Pancreas (tissue), 10 donors: ENCODE measurements at regions of chr16 and their contacts with region 1.

Region 1: DNA sequence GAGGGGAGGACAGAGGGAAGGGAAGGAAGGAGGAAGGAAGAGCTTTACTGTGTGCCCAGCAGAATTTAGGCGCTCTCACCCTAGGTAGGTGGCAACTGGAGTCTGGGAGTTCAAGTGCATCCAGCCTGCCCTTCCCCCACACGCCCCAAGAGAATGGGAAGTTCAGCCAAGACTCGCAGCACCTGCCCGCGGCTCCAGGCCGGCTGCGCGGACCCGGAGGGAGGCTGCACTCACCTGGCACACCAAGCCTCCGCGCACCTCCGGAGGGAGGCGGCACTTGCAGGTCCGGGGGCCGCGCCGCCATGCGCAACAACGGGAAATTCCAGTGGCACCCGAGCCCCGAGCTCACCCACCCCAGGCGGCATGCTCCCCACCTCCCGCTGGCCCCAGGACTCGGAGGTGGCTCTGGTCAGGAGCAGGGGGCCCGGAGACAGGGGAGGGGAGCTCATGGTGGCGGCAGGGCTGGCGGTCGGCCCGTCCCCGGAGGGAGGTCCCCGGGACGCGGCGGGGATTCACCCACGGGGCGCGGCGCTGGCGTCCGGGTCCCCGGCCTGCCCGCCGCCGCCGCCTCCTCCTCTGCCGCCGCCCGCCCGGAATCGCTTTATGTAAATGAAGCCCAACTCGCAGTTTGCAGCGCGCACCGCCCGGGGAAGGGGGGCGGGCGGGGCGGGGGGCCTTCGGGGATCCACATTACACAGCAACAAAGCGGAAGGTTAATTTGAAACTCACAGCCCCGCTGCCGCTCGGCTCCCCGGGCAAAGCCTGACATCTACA is at the start of gene ZFHX3:
- DNase-seq: peak; percentile 80 to 92 (median 84)
- ATAC-seq: peak; percentile 80 to 87 (median 84)
- H3K4me3 ChIP-seq: peak within 1 kb of the TSS; percentile 77 to 89 (median 81)
- H3K27ac ChIP-seq: peak within 1 kb of the TSS; percentile 89 to 92 (median 90)
- H3K4me1 ChIP-seq: peaks cover 19 to 50% (median 44%) of the 10 kb centered on the region in 3 donors
- H3K27me3 ChIP-seq: no peaks in the 10 kb centered on the region
- CTCF ChIP-seq: no peak
- total RNA-seq, gene ZFHX3: 8.7 to 17.6 (median 10.4) TPM

Region 2: GRCh38 chr16:72961121-72961763 is 86.5 kb before region 1 on chr16:
- intact Hi-C with region 1: loop called in 1 of 3 experiments (anchors 10 kb)
- DNase-seq: no peak
- ATAC-seq: peak; percentile 52 to 76 (median 67)
- H3K4me3 ChIP-seq: no peak overlapping the region
- H3K27ac ChIP-seq: no peak overlapping the region
- H3K4me1 ChIP-seq: no peaks in the 10 kb centered on the region
- H3K27me3 ChIP-seq: no peaks in the 10 kb centered on the region
- CTCF ChIP-seq: peak in 2 of 4 donors; percentile 26 to 35

Region 3: DNA sequence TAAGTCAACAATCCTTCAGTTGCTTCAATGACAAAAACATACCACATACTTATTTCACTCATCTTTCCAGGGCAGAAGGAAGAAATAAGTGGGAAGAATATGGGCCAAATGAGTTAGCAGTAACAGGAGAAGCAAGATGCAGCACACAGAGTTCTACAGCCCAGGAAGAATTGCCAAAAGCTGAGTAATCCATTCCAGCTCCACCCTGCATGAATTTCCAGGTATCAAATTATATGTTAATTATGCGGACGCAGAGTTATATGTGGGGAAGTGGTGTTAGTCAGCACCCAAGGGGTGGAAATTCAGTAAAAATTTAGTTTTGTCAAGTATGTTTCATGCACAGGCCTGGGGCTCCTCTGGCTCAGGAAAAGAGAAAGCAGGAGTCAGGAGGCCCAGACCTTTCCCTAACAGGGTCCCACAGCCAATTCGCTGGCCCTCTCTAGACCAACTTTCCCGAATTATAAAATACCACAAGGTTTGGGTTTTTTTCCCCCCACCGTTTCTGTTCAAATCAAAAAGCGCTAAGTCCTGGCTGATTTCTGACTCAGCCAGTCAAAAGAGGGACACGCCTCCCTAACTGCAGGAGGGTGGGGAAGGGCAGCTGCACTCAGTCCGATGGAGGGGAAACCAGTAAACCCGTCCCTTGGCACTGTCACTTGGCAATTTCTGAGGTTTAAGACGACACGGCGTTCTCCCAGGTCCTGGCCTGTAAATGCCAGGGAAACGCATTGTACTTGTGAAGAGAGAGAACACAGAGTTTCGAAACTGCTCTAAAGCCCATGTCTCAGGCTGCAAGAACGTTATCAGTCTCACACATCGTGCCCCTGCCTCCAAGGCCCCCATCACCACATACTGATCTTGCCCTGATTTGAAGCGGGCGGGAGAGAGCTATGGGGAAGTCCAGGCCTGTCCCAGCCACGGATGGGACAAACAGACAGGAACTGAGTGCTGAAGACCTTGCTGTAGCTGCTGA is 57.8 kb before region 1 on chr16:
- intact Hi-C with region 1: no loop called
- DNase-seq: no peak
- ATAC-seq: peak; percentile 51 to 72 (median 70)
- H3K4me3 ChIP-seq: no peak overlapping the region
- H3K27ac ChIP-seq: peak overlapping the region in 3 of 4 donors; percentile 6 to 77 (median 63)
- H3K4me1 ChIP-seq: peaks cover 23 to 48% (median 35%) of the 10 kb centered on the region in 3 donors
- H3K27me3 ChIP-seq: no peaks in the 10 kb centered on the region
- CTCF ChIP-seq: no peak

Region 4: GRCh38 chr16:73131156-73131862 is 83.6 kb after region 1 on chr16:
- intact Hi-C with region 1: no loop called
- DNase-seq: no peak
- ATAC-seq: no peak
- H3K4me3 ChIP-seq: no peak overlapping the region
- H3K27ac ChIP-seq: no peak overlapping the region
- H3K4me1 ChIP-seq: no peaks in the 10 kb centered on the region
- H3K27me3 ChIP-seq: no peaks in the 10 kb centered on the region
- CTCF ChIP-seq: no peak